ENCODE measurements at regions of chr2 and their contacts with region 1.

Region 1: GRCh38 chr2:130181325-130181879 is at the start of gene SMPD4:
- DNase-seq: peak; percentile 98
- ATAC-seq: peak; percentile 72
- H3K4me3 ChIP-seq: peak within 1 kb of the TSS; percentile 38 to 90 (median 80)
- H3K4me3 Mint-ChIP-seq: peak within 1 kb of the TSS; percentile 92
- H3K27ac ChIP-seq: peak within 1 kb of the TSS; percentile 85 to 91
- H3K27ac Mint-ChIP-seq: peak within 1 kb of the TSS; percentile 97
- H3K4me1 ChIP-seq: peaks cover 14 to 21% of the 10 kb centered on the region in 2 donors
- H3K4me1 Mint-ChIP-seq: peaks cover 24% of the 10 kb centered on the region
- H3K27me3 ChIP-seq: no peaks in the 10 kb centered on the region
- H3K27me3 Mint-ChIP-seq: no peaks in the 10 kb centered on the region
- CTCF ChIP-seq: no peak
- total RNA-seq, gene SMPD4: 63.8 and 67.5 TPM in 2 replicates

Region 2: DNA sequence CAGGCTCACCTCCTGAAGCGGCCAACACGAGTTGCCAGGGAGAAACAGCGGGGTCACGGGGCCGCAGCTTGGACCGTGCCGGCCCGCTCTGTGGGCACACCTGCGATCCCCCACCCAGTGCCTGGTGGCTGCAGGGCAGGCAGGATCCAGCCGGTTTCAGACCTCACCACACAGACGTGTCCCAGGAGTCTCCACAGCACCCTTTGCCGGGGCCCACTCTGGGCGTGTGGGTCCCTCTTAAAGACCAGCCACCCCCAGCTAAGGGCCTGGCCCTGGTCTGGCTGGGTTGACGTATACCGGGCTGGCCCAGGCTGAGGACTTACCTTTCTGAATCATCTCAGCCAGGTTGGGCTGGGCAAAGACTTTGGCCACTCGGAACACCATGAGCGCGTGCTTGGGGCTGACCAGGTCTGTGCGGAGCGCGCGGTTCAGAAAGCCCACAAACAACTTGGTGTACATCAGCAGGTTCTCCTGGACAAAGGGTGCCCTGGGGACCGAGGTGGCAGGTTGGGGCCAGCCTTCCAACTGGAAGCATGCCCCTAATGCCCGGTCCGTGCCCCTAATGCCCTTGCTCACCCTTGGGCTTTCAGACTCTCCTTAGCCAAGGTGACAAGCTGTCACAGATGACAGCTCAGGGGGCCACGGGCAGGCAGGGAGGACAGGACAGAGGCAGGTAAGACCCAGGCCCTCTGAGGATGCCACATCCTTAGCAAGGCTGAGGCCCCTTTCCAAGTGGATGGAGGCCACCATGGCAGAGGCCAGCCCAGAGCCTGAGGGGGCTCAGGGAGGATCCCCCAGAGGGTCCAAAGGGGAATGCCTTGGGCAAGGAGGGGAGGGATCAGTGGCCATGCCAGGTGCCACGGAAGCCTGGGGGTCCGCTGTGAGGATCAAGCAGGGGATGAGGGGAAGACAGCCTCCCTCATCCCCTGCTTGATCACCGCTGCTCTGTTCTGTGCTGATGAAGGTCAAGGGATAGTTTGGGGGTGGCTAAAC is 26.3 kb before region 1 on chr2:
- CTCF ChIA-PET with region 1: interaction called, 6 read pairs
- POLR2A ChIA-PET with region 1: interaction called, 10 read pairs
- intact Hi-C with region 1: loop called (anchors 1 kb)
- DNase-seq: no peak
- ATAC-seq: no peak
- H3K4me3 ChIP-seq: no peak overlapping the region
- H3K4me3 Mint-ChIP-seq: no peak overlapping the region
- H3K27ac ChIP-seq: no peak overlapping the region
- H3K27ac Mint-ChIP-seq: peak overlapping the region; percentile 46
- H3K4me1 ChIP-seq: peaks cover 24 to 32% of the 10 kb centered on the region in 2 donors
- H3K4me1 Mint-ChIP-seq: peaks cover 30% of the 10 kb centered on the region
- H3K27me3 ChIP-seq: no peaks in the 10 kb centered on the region
- H3K27me3 Mint-ChIP-seq: no peaks in the 10 kb centered on the region
- CTCF ChIP-seq: no peak

Measured in B cell (primary cell).